Activated naive CD4-positive, alpha-beta T cell treated with anti-CD3 and anti-CD28 coated beads for 36 hours (primary cell): ENCODE measurements at regions of chr15 and their contacts with region 1.

Region 1: GRCh38 chr15:101652098-101652782 is at the start of gene TM2D3:
- DNase-seq: peak; percentile 95
- H3K4me3 Mint-ChIP-seq: peak within 1 kb of the TSS; percentile 89
- H3K27ac Mint-ChIP-seq: peak within 1 kb of the TSS; percentile 95
- H3K4me1 Mint-ChIP-seq: peaks cover 49% of the 10 kb centered on the region
- H3K27me3 Mint-ChIP-seq: no peaks in the 10 kb centered on the region
- total RNA-seq, gene TM2D3: 52.8 to 53.0 TPM

Region 2: GRCh38 chr15:101014921-101015841 is 637.1 kb before region 1 on chr15:
- CTCF ChIA-PET with region 1: no interaction called
- intact Hi-C with region 1: loop called (anchors 5 kb)
- DNase-seq: peak; percentile 81
- H3K4me3 Mint-ChIP-seq: no peak overlapping the region
- H3K27ac Mint-ChIP-seq: no peak overlapping the region
- H3K4me1 Mint-ChIP-seq: no peaks in the 10 kb centered on the region
- H3K27me3 Mint-ChIP-seq: no peaks in the 10 kb centered on the region

Region 3: DNA sequence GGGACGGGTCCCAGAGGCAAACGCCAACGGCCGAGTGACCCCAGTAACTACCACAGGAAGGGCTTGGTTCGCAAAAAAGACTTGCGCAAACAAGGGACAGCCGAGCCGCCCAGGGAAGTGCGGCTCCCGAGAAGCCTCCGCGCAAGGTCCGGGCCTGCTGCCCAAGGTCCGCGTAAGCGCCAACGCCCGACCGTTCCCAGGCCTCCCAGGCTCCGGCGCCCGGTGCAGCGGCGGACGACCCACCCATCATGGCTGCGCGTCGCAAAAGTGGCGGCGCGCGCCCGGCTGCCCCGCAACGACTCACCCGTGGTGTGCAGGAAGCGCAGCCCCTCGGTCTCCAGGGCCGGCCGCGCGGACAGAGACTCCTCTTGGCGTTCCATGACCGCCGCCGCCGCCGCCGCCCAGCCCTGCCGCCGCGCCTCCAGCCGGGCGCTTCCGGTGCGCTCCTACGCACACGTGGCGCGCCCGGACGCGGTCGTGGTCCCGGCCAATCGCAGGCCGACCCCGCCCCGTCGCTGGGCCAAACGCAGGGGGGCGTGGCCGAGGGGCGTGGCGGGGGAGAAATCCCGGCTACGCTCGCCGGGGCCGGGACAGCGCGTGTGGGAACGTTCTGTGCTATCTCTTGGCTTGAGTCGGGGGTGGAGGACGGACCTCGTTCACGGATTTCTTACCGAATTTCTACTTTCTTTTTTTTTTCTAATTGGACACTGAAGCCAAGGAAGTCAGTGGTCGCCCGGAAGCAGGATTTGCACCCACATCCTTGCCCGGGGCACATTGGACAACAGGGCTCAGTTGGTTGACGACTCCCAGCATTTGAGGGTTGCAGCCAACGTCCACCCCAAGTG is 375.0 kb before region 1 on chr15 and contains the start of gene SELENOS:
- CTCF ChIA-PET with region 1: no interaction called
- intact Hi-C with region 1: loop called (anchors 5 kb)
- DNase-seq: peak; percentile 85
- H3K4me3 Mint-ChIP-seq: peak within 1 kb of the TSS; percentile 90
- H3K27ac Mint-ChIP-seq: peak within 1 kb of the TSS; percentile 54
- H3K4me1 Mint-ChIP-seq: peaks cover 21% of the 10 kb centered on the region
- H3K27me3 Mint-ChIP-seq: no peaks in the 10 kb centered on the region
- total RNA-seq, gene SELENOS: 13.1 to 15.3 TPM

Region 4: DNA sequence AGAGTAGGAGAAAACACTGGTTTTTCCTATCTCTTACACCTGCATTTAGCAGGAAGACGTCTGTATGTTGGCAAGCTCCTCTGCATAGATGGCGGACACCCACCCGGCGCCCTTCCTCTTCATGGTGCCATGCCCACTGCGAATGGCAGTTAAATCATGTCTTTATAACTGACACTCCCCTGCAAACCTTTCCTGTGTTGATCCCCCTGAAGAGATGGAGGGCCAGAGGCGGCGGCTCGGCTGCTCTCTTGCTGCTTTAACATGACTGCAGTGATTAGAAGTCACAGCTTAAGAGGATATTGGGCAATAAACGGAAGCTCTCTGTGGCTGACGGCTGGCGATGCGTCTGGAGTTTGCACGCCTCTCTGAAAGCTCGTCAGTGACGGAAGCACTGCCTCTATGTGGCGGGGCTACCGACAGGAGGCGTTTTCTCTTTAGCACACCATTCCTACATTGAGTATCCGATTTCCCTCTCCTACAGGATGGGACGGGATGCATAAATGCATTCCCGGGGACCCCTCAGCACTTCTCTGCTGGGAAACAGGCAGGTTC is 331.7 kb before region 1 on chr15:
- CTCF ChIA-PET with region 1: no interaction called
- intact Hi-C with region 1: loop called (anchors 1 kb)
- DNase-seq: peak; percentile 89
- H3K4me3 Mint-ChIP-seq: peak overlapping the region; percentile 80
- H3K27ac Mint-ChIP-seq: peak overlapping the region; percentile 74
- H3K4me1 Mint-ChIP-seq: peaks cover 10% of the 10 kb centered on the region
- H3K27me3 Mint-ChIP-seq: no peaks in the 10 kb centered on the region

Region 5: GRCh38 chr15:101426881-101427280 is 225.4 kb before region 1 on chr15:
- CTCF ChIA-PET with region 1: no interaction called
- intact Hi-C with region 1: no loop called
- DNase-seq: no peak
- H3K4me3 Mint-ChIP-seq: no peak overlapping the region
- H3K27ac Mint-ChIP-seq: no peak overlapping the region
- H3K4me1 Mint-ChIP-seq: no peaks in the 10 kb centered on the region
- H3K27me3 Mint-ChIP-seq: peaks cover 3% of the 10 kb centered on the region

Region 6: DNA sequence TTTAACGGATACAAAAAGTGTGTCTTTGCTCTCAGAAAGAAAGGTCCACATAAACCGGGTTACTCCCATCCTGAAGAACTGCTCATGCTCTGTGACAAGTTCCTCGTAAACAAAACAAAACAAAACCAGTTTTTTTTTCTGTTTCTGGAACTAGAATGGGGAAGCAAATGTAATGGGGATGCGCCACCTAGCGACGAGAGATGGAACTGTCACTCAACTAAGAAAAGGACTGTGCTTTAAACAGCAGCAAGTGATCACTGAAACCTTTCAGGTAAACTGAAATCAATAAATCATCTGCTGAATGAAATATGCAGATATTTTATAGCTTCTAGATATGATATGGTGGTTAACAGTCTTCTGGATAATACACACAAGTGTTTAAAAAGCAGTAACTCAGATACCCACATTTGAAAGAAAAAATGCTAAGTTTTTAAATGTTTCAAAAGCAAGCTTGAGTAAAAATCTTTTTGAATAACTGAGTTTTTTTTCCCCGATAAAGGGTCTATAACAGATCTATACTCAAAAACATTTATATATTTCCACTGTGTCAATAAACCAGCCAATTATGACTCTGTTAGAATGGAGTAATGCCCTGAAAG is 11.0 kb before region 1 on chr15:
- CTCF ChIA-PET with region 1: interaction called, 19 read pairs
- intact Hi-C with region 1: loop called (anchors 1 kb)
- DNase-seq: peak; percentile 86
- H3K4me3 Mint-ChIP-seq: no peak overlapping the region
- H3K27ac Mint-ChIP-seq: peak overlapping the region; percentile 59
- H3K4me1 Mint-ChIP-seq: peaks cover 30% of the 10 kb centered on the region
- H3K27me3 Mint-ChIP-seq: no peaks in the 10 kb centered on the region

Region 7: GRCh38 chr15:101684384-101684783 is 32.1 kb after region 1 on chr15:
- CTCF ChIA-PET with region 1: no interaction called
- intact Hi-C with region 1: no loop called
- DNase-seq: no peak
- H3K4me3 Mint-ChIP-seq: no peak overlapping the region
- H3K27ac Mint-ChIP-seq: peak overlapping the region; percentile 31
- H3K4me1 Mint-ChIP-seq: peaks cover 11% of the 10 kb centered on the region
- H3K27me3 Mint-ChIP-seq: no peaks in the 10 kb centered on the region

Region 8: DNA sequence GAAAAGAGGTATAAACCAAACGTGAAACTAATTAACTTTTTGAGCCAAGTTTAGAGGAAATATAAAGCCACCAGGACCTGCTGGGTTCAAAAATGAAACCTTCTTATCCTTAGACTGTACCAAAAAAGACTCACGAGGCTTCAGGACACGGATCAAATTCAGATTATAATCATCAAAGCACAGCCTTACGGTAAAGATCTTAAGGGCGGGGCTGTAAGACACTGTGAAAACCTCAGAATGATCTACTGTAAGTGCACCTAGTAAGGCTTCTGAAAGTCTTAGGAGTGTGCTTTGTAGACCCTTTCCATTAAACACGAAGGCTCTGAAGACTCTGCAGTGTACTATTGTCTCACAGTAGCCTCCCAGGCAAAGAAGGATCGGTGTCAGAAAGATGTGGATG is 45.2 kb after region 1 on chr15:
- CTCF ChIA-PET with region 1: no interaction called
- intact Hi-C with region 1: loop called (anchors 2 kb)
- DNase-seq: peak; percentile 33
- H3K4me3 Mint-ChIP-seq: peak overlapping the region; percentile 60
- H3K27ac Mint-ChIP-seq: peak overlapping the region; percentile 89
- H3K4me1 Mint-ChIP-seq: peaks cover 42% of the 10 kb centered on the region
- H3K27me3 Mint-ChIP-seq: no peaks in the 10 kb centered on the region

Region 9: DNA sequence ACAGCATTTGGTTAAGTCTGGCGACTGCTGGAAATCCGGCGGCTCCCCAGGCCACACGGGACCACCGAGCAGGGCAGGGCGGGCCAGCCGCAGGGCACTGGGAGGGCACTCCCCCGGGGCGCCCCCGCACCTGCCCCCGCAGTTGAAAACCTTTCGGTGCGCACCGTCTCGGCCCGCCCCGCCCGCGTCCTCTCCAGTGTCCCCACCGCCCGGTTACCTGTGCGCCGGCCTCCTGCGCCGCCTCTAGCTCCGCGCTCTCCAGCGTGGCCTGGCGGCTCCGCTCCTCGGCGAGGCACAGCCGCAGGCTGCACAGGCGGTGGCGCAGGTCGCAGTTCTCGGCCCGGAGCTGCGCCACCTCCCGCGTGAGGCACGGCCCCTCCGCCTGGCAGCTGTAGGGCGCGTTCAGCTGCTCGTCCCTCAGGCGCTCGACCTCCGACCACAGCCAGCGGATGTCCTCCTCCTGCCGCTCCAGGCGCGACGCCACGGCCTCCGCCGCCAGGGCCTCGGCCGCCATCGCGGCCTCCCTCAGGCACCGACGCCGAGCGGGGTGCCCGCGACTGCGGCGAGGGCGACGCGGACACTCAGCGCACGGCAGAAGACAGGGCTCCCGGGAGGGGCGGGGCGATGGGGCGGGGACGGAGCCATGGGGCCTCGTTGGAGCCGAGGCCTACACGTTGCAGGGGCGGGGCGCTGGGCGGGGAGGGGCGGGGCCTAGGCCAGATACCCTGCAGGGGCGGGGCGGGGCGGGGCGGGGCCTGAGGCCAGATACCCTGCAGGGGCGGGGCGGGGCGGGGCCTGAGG is 71.8 kb after region 1 on chr15 and contains the start of gene TARS3:
- CTCF ChIA-PET with region 1: no interaction called
- intact Hi-C with region 1: loop called (anchors 1 kb)
- DNase-seq: peak; percentile 96
- H3K4me3 Mint-ChIP-seq: peak within 1 kb of the TSS; percentile 85
- H3K27ac Mint-ChIP-seq: peak within 1 kb of the TSS; percentile 72
- H3K4me1 Mint-ChIP-seq: peaks cover 11% of the 10 kb centered on the region
- H3K27me3 Mint-ChIP-seq: no peaks in the 10 kb centered on the region
- total RNA-seq, gene TARS3: 6.9 to 8.0 TPM